ENCODE measurements at regions of chr4 and their contacts with region 1.

Region 1: GRCh38 chr4:10018818-10019461 is 2.4 kb downstream of the SLC2A9 start:
- DNase-seq: peak; percentile 89
- ATAC-seq: peak; percentile 98
- H3K4me3 ChIP-seq: peak overlapping the region; percentile 27 to 66 (median 64)
- H3K4me3 Mint-ChIP-seq: peak overlapping the region; percentile 91
- H3K27ac ChIP-seq: peak overlapping the region; percentile 73 to 77
- H3K27ac Mint-ChIP-seq: peak overlapping the region; percentile 89
- H3K4me1 ChIP-seq: peaks cover 22 to 42% of the 10 kb centered on the region in 2 donors
- H3K4me1 Mint-ChIP-seq: peaks cover 46% of the 10 kb centered on the region
- H3K27me3 ChIP-seq: no peaks in the 10 kb centered on the region
- H3K27me3 Mint-ChIP-seq: no peaks in the 10 kb centered on the region
- CTCF ChIP-seq: peak; percentile 98

Region 2: DNA sequence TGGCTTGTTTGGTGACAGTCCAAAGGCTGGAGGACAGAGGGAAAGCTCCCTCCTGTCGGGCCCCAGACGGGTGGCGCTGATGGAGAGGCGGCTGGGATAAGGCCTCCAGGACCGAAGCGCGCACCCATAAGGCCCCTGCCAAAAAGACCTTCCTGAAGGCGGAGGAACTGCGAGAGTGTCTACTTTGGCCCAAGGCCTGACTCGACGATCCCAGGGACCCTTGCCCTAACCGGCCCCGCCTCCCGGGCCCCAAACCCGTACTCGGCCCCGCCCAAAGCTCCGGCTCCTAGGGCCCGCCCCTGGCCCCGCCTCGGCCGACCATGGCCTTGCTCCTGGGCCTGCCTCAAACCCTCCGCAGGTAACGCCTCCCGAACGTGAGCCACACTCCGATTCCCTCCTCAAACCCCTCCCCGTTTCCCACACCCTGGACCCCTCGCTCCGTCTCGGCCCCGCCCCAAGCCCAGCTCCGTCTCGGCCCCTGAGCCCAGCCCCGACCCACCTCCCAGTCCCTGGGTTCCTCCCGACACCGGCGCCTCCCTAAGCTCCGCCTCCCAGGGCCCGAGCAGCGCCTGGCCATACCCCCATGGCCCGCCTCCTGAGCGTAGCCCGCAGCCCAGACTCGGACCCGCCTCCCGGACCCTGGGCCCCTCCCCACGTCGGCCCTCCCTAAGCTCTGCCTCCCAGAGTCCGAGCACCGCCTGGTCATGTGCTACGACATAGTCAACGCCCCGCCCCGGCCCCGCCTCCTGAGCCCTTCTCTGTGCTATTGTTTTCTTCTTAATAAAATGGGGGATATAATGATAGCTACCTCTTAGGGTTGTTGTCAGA is 327.5 kb before region 1 on chr4:
- CTCF ChIA-PET with region 1: interaction called, 5 read pairs
- POLR2A ChIA-PET with region 1: no interaction called
- intact Hi-C with region 1: loop called (anchors 2 kb)
- DNase-seq: peak; percentile 93
- ATAC-seq: peak; percentile 100
- H3K4me3 ChIP-seq: peak overlapping the region in 4 of 5 experiments; percentile 50 to 68 (median 66)
- H3K4me3 Mint-ChIP-seq: peak overlapping the region; percentile 90
- H3K27ac ChIP-seq: peak overlapping the region; percentile 42 to 70
- H3K27ac Mint-ChIP-seq: peak overlapping the region; percentile 88
- H3K4me1 ChIP-seq: peaks cover 3 to 9% of the 10 kb centered on the region in 2 donors
- H3K4me1 Mint-ChIP-seq: peaks cover 8% of the 10 kb centered on the region
- H3K27me3 ChIP-seq: no peaks in the 10 kb centered on the region
- H3K27me3 Mint-ChIP-seq: peaks cover 2% of the 10 kb centered on the region
- CTCF ChIP-seq: no peak

Region 3: DNA sequence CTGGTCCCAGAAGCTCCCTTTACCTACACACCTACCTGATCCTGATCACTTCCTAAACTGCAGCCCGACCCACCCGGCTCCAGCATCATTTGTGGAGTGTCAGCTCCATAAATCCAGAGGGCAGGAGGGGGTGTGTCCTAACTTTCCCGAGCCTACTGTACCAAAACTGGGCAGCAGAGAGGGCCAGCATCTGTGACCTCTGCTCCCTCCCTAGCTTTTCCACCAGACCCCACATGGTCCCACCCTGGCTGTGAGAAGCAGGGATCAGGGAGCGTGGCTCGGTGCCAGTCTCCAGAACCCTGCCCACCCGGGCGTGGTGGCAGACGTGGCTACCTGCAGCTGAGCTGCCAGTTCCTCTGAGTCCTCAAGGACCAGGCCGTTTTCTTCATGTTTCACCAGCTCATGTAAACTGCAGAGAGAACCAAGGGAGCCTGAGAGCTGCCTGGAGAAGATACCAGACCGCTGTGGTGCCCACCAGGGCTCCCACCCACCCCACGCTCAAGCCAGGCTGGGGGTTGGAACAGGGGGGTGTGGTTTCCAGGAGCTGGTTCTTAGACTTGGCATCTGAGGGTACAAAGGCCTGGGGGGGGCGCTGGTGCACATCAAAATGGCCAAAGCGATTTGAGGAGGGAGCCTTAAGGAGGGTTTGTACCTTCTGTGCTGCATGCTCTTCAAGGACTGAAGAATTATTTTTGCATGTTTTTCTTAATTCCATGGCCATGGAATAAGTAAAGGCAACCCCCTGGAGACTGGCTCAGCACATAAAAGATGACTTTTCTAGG is 314.2 kb before region 1 on chr4:
- CTCF ChIA-PET with region 1: interaction called, 4 read pairs
- POLR2A ChIA-PET with region 1: no interaction called
- intact Hi-C with region 1: loop called (anchors 1 kb)
- DNase-seq: no peak
- ATAC-seq: no peak
- H3K4me3 ChIP-seq: no peak overlapping the region
- H3K4me3 Mint-ChIP-seq: no peak overlapping the region
- H3K27ac ChIP-seq: no peak overlapping the region
- H3K27ac Mint-ChIP-seq: no peak overlapping the region
- H3K4me1 ChIP-seq: peaks cover 5 to 8% of the 10 kb centered on the region in 2 donors
- H3K4me1 Mint-ChIP-seq: peaks cover 14% of the 10 kb centered on the region
- H3K27me3 ChIP-seq: no peaks in the 10 kb centered on the region
- H3K27me3 Mint-ChIP-seq: no peaks in the 10 kb centered on the region
- CTCF ChIP-seq: no peak

Region 4: GRCh38 chr4:9762823-9763475 is 256.0 kb before region 1 on chr4:
- CTCF ChIA-PET with region 1: interaction called, 22 read pairs
- POLR2A ChIA-PET with region 1: no interaction called
- intact Hi-C with region 1: loop called (anchors 1 kb)
- DNase-seq: peak; percentile 48
- ATAC-seq: no peak
- H3K4me3 ChIP-seq: no peak overlapping the region
- H3K4me3 Mint-ChIP-seq: no peak overlapping the region
- H3K27ac ChIP-seq: no peak overlapping the region
- H3K27ac Mint-ChIP-seq: no peak overlapping the region
- H3K4me1 ChIP-seq: no peaks in the 10 kb centered on the region
- H3K4me1 Mint-ChIP-seq: no peaks in the 10 kb centered on the region
- H3K27me3 ChIP-seq: no peaks in the 10 kb centered on the region
- H3K27me3 Mint-ChIP-seq: peaks cover 14% of the 10 kb centered on the region
- CTCF ChIP-seq: peak; percentile 45

Region 5: DNA sequence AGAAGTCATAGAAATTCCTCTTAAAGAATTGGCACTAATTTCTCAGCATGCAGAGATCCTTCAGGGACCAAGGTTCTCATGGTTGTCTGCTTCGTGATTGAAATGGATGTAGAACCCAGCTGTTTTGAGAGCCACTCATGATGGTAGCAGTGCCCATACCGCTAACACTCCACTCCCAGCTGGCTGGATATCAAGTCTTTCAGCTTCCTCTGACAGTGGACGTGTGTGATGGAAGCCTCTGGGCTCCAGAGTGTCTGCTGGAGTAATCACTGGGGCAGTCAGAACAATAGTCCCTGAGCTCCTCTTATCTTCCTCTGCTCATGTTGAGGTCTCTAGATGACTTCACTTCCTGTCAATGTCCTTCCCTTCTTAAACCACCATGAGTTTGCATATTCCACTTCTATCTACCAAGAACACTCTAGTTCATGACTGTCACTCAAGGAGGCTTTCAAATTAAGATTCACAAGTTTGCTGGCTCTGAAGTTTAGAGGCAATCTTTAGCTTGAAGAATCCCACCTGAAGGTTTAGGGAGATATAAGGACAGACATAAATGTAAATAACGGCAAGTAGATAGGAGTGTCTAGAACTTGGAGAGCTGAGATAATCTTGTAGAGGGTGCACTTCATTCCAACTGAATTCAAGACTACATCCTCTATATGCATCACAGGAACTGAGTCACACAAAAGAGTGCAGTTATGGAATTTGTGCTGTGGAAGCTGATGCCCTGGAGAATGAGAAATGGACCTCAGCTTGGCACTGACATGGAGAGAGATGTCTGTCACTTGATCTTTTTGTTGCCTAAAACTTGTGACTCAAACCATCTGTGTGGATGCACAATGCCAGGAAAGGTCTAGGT is 162.2 kb after region 1 on chr4:
- CTCF ChIA-PET with region 1: no interaction called
- POLR2A ChIA-PET with region 1: no interaction called
- intact Hi-C with region 1: no loop called
- DNase-seq: no peak
- ATAC-seq: peak; percentile 24
- H3K4me3 ChIP-seq: no peak overlapping the region
- H3K4me3 Mint-ChIP-seq: no peak overlapping the region
- H3K27ac ChIP-seq: no peak overlapping the region
- H3K27ac Mint-ChIP-seq: no peak overlapping the region
- H3K4me1 ChIP-seq: peaks cover 0 to 6% of the 10 kb centered on the region in 2 donors
- H3K4me1 Mint-ChIP-seq: peaks cover 6% of the 10 kb centered on the region
- H3K27me3 ChIP-seq: no peaks in the 10 kb centered on the region
- H3K27me3 Mint-ChIP-seq: peaks cover 20% of the 10 kb centered on the region
- CTCF ChIP-seq: no peak

Region 6: DNA sequence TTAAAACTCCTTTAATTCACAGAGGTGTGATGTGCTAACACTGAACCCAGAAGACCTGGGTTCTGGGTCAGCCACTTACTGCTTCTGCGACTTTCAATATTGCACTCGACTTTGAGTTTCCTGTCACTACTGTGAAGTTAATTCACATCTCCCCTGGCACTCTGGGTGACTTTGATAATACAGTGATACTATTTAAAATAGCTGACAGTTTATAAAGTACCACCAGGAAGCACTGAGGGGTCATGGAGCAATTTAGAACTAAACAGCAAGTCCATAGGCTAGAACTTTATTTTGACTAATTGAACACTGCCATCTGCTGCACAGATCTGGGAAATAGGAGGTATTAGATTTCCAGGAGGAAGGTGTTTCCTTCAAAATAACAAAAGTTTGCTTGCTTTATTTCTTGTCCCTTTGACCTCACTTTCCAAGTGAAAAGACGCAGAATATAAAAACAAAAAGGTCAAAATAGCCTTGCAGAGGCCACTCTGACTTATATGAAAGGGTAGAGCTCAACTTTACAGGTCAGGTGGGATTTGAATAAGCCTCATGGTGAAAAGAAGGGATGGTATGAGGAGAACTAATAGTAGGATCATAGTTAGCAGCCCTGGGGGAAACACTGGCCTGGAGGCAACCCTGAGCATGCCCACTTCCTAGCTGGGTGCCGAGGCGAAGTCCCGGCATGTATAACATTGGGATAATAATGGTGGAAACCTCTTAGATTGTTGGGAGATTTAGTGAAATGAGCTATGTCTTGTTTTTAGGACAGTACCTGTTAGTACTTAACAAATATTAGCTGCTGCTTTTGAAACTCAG is 384.9 kb after region 1 on chr4:
- CTCF ChIA-PET with region 1: interaction called, 3 read pairs
- POLR2A ChIA-PET with region 1: no interaction called
- intact Hi-C with region 1: loop called (anchors 5 kb)
- DNase-seq: peak; percentile 16
- ATAC-seq: no peak
- H3K4me3 ChIP-seq: no peak overlapping the region
- H3K4me3 Mint-ChIP-seq: no peak overlapping the region
- H3K27ac ChIP-seq: no peak overlapping the region
- H3K27ac Mint-ChIP-seq: no peak overlapping the region
- H3K4me1 ChIP-seq: no peaks in the 10 kb centered on the region
- H3K4me1 Mint-ChIP-seq: no peaks in the 10 kb centered on the region
- H3K27me3 ChIP-seq: peaks cover 0 to 4% (median 0%) of the 10 kb centered on the region in 4 experiments
- H3K27me3 Mint-ChIP-seq: peaks cover 15% of the 10 kb centered on the region
- CTCF ChIP-seq: peak; percentile 34

Region 7: DNA sequence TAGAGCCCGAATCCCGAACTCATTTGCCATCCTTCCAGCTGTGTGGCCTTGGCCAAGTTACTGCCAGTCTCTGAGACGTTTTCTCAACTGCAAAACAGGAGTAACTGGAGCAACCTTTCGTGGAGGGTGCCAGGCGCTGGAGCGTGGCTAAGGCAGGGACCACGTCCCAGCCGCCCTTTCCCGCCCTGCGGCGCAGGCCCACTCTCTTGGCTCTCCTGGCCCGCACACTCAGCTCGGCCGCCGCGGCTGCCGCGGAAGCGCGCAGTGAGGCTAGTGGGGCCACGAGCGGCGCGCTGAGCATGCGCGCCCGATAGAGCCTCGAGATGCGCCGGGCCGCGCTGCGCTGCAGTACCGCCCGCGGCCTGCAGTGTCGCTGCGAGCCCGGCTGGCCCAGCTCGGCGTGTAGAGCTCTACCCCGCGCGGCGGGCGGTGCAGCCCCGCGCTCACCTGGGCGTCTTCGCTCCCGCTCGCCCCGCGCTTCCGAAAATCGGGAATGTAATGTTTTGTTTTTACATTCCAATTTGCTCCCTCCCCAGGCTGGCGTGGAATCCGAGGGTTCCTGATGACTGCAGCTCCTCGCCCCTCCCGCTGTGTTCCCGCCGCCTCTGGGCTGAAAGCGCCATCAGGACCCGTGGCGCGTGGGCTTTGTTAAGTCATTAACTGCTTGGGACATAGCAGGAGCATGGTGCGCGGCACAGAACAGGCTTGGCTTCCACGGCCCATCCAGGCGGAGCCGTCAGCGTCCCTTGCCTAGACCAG is 442.3 kb after region 1 on chr4:
- CTCF ChIA-PET with region 1: no interaction called
- POLR2A ChIA-PET with region 1: no interaction called
- intact Hi-C with region 1: loop called (anchors 2 kb)
- DNase-seq: peak; percentile 91
- ATAC-seq: peak; percentile 82
- H3K4me3 ChIP-seq: peak overlapping the region; percentile 27 to 62 (median 48)
- H3K4me3 Mint-ChIP-seq: peak overlapping the region; percentile 82
- H3K27ac ChIP-seq: no peak overlapping the region
- H3K27ac Mint-ChIP-seq: no peak overlapping the region
- H3K4me1 ChIP-seq: peaks cover 13 to 25% of the 10 kb centered on the region in 2 donors
- H3K4me1 Mint-ChIP-seq: peaks cover 21% of the 10 kb centered on the region
- H3K27me3 ChIP-seq: peaks cover 0 to 40% (median 17%) of the 10 kb centered on the region in 4 experiments
- H3K27me3 Mint-ChIP-seq: peaks cover 48% of the 10 kb centered on the region
- CTCF ChIP-seq: peak; percentile 99